ENCODE measurements at regions of chr1 and their contacts with region 1.

Region 1: GRCh38 chr1:89274411-89274857 is 1.8 kb upstream of the GBP5 start:
- DNase-seq: peak; percentile 33
- ATAC-seq: peak; percentile 56
- H3K4me3 Mint-ChIP-seq: peak overlapping the region; percentile 100
- H3K27ac Mint-ChIP-seq: peak overlapping the region; percentile 100
- H3K4me1 Mint-ChIP-seq: peaks cover 56% of the 10 kb centered on the region
- H3K27me3 Mint-ChIP-seq: no peaks in the 10 kb centered on the region
- CTCF ChIP-seq: no peak

Region 2: DNA sequence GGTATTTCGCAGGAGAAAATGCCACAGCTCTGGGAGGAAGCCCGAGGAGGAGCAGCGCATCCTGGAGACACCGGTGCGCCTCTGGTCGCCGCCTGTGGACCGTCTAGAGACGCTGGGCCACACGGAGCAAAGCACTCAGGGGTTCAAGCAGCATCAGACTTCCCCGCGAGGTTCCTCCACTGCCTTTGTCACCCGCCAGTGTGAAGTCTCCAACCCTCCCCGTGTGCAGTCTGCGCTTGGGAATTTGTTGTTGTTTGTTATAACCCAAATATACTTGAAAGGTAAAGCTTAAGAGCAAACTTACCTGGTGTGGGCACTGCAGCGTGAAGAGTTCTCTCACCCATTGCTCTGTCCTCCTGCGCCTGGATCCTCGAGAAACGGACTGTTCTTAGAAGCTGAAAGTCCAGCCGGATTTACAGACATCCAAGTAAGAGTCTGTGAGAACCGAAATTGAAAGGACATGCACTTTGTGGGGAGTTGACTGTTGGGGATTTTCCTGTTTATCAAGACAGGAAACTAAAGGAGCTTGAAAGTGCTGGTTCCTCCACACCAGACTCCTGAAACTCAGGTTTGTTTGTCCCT is 75.9 kb before region 1 on chr1 and contains the start of gene GBP4:
- CTCF ChIA-PET with region 1: interaction called, 10 read pairs
- POLR2A ChIA-PET with region 1: interaction called, 58 read pairs
- intact Hi-C with region 1: loop called (anchors 5 kb)
- DNase-seq: peak; percentile 61
- ATAC-seq: peak; percentile 58
- H3K4me3 Mint-ChIP-seq: peak within 1 kb of the TSS; percentile 92
- H3K27ac Mint-ChIP-seq: peak within 1 kb of the TSS; percentile 97
- H3K4me1 Mint-ChIP-seq: peaks cover 76% of the 10 kb centered on the region
- H3K27me3 Mint-ChIP-seq: no peaks in the 10 kb centered on the region
- CTCF ChIP-seq: no peak
- total RNA-seq, gene GBP4: 34.2 to 38.3 TPM

Region 3: GRCh38 chr1:89261926-89262515 is 12.4 kb before region 1 on chr1:
- CTCF ChIA-PET with region 1: interaction called, 11 read pairs
- POLR2A ChIA-PET with region 1: interaction called, 37 read pairs
- intact Hi-C with region 1: no loop called
- DNase-seq: no peak
- ATAC-seq: no peak
- H3K4me3 Mint-ChIP-seq: peak overlapping the region; percentile 2
- H3K27ac Mint-ChIP-seq: peak overlapping the region; percentile 67
- H3K4me1 Mint-ChIP-seq: peaks cover 78% of the 10 kb centered on the region
- H3K27me3 Mint-ChIP-seq: no peaks in the 10 kb centered on the region
- CTCF ChIP-seq: no peak

Region 4: DNA sequence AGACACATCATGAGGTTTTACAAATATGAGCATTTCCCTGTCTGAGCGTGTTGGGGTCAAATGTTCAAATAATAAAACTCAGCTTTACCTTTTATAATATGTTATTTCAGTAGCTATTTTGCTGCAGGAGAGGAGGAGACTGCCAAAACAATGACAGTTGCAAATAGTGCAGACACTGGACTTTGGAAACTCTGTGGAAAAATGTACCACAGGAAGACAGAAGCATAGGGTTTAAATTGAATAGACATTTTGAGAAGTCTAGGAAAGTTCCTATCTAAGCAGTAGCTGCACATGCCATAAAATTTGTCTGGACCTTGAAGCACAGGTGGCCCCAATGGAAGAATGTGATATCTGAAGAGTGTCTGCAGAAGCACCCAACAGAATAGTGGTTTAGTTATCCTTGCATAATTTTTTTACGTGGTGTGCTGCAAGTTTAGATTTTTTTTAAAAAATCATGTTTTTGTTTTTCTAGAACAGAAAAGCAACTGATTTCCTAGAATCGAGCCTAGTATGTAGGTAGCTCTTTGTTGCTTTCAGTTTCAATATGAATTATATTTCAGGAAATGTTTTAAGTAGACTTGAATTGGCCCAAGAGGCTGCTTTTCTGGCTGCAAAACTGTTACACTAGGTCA is 12.2 kb after region 1 on chr1:
- CTCF ChIA-PET with region 1: interaction called, 11 read pairs
- POLR2A ChIA-PET with region 1: interaction called, 114 read pairs
- intact Hi-C with region 1: no loop called
- DNase-seq: peak; percentile 33
- ATAC-seq: peak; percentile 69
- H3K4me3 Mint-ChIP-seq: peak overlapping the region; percentile 39
- H3K27ac Mint-ChIP-seq: peak overlapping the region; percentile 87
- H3K4me1 Mint-ChIP-seq: peaks cover 71% of the 10 kb centered on the region
- H3K27me3 Mint-ChIP-seq: no peaks in the 10 kb centered on the region
- CTCF ChIP-seq: no peak

Region 5: GRCh38 chr1:89298461-89298860 is 24.0 kb after region 1 on chr1:
- CTCF ChIA-PET with region 1: interaction called, 3 read pairs
- POLR2A ChIA-PET with region 1: interaction called, 10 read pairs
- intact Hi-C with region 1: no loop called
- DNase-seq: no peak
- ATAC-seq: peak; percentile 34
- H3K4me3 Mint-ChIP-seq: no peak overlapping the region
- H3K27ac Mint-ChIP-seq: no peak overlapping the region
- H3K4me1 Mint-ChIP-seq: peaks cover 64% of the 10 kb centered on the region
- H3K27me3 Mint-ChIP-seq: no peaks in the 10 kb centered on the region
- CTCF ChIP-seq: no peak

Region 6: DNA sequence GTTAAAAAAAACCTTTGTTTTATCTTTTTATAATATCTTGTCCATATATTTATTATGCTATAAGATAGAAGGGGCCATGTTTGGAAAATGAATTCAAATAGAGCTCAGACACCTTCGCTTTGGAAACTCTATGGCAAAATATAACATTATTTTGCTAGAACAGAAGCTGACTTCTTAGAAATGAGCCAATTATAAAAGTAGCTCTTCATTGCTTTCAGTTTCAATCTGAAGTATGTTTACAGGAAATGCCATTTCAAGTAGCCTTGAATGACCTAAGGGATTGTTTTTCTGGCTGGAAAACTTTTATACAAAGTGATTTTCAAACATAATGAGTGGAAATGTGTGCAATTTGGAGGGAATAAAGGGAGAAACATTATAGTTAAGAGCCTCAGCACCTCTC is 36.1 kb after region 1 on chr1:
- CTCF ChIA-PET with region 1: interaction called, 4 read pairs
- POLR2A ChIA-PET with region 1: interaction called, 31 read pairs
- intact Hi-C with region 1: loop called (anchors 5 kb)
- DNase-seq: no peak
- ATAC-seq: peak; percentile 63
- H3K4me3 Mint-ChIP-seq: peak overlapping the region; percentile 18
- H3K27ac Mint-ChIP-seq: peak overlapping the region; percentile 94
- H3K4me1 Mint-ChIP-seq: peaks cover 58% of the 10 kb centered on the region
- H3K27me3 Mint-ChIP-seq: no peaks in the 10 kb centered on the region
- CTCF ChIP-seq: no peak

Region 7: GRCh38 chr1:89381618-89382017 is 107.2 kb after region 1 on chr1:
- CTCF ChIA-PET with region 1: no interaction called
- POLR2A ChIA-PET with region 1: no interaction called
- intact Hi-C with region 1: no loop called
- DNase-seq: no peak
- ATAC-seq: no peak
- H3K4me3 Mint-ChIP-seq: no peak overlapping the region
- H3K27ac Mint-ChIP-seq: no peak overlapping the region
- H3K4me1 Mint-ChIP-seq: peaks cover 9% of the 10 kb centered on the region
- H3K27me3 Mint-ChIP-seq: no peaks in the 10 kb centered on the region
- CTCF ChIP-seq: no peak